BJ (cell line): ENCODE measurements at regions of chr16 and their contacts with region 1.

Region 1: DNA sequence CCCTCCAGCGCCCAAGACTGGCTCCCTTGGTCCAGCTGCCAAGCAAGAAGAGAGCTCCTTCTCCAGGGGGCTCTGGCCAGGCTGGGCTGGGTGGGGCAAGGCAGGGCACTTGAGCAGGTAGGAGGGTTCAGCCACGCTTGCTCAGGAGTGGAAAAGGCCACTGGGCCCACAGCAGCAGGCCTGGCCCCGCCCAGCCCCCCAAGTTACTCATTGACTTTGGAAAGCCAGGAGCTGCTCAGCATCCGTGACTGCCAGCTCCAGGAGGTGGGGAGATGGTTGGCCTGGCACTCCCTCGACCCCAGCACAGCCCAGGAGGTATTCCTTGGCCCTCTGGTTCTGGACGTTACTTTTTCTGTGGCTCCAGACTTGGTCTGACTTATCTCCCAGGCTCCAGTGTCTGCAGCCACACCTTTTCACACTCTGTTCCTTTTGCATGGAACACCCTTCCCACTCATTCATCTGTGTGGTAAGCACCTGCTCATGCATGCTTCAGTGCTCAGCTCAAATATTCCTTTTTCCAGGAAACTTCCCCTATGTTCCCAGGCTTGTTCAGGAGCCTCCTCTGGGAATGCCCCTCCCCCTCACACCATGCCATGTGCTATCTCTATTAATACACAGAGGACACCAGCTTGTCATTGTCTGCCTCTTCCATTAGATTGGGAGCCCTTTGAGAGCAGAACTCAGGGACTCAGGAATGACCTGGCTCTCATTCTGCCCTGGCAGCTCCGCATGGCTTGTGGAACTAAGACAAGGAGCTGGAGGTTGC is at the start of gene CDH16:
- DNase-seq: no peak
- H3K4me3 ChIP-seq: no peak within 1 kb of the TSS
- H3K27me3 ChIP-seq: peaks cover 19% of the 10 kb centered on the region
- CTCF ChIP-seq: no peak
- polyA plus RNA-seq, gene CDH16: not detected in 2 replicates

Region 2: DNA sequence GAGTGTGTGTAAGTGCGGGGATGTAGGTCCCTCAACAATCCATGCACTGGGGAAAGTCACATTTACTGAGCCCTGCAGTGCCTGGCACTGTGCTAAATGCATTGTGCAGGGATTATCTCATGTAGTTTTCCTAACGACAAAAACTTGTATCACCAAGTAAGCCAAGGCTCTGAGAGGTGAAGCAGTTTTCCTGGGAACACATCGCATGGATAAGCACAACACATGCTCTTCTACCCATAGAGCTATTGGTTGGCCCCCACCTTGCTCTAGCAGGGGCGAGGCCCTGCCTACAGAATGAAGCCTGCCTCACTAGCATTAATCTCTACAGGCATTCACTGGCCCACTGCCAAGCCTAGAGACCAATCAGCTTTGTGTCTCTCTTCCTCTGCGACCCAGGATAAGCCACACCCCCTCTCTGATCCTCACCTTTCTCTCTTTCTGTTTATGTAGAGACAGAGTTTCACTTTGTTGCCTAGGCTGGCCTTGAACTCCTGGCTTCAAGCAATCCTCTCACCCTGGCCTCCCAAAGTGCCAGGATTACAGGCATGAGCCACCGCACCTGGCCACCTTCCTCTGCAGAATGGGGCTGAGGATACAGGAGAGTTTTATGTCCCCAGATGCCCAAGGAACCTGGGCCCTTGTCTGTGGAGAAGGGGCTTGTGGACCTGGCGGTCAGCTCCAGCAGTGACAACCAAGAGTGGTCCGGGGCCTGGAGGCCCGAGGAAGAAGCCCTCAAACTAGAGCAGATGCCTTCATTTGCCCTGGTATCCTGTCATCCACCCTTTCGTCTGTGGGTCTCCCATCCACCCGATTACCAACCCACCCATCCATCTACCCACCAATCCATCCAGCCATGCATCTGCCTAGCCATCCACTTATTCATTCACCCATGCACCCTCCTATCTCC is 13.1 kb before region 1 on chr16:
- CTCF ChIA-PET with region 1: interaction called, 118 read pairs
- POLR2A ChIA-PET with region 1: no interaction called
- DNase-seq: no peak
- H3K4me3 ChIP-seq: no peak overlapping the region
- H3K27me3 ChIP-seq: no peaks in the 10 kb centered on the region; the same call in none of the 2 replicates
- CTCF ChIP-seq: no peak

Region 3: DNA sequence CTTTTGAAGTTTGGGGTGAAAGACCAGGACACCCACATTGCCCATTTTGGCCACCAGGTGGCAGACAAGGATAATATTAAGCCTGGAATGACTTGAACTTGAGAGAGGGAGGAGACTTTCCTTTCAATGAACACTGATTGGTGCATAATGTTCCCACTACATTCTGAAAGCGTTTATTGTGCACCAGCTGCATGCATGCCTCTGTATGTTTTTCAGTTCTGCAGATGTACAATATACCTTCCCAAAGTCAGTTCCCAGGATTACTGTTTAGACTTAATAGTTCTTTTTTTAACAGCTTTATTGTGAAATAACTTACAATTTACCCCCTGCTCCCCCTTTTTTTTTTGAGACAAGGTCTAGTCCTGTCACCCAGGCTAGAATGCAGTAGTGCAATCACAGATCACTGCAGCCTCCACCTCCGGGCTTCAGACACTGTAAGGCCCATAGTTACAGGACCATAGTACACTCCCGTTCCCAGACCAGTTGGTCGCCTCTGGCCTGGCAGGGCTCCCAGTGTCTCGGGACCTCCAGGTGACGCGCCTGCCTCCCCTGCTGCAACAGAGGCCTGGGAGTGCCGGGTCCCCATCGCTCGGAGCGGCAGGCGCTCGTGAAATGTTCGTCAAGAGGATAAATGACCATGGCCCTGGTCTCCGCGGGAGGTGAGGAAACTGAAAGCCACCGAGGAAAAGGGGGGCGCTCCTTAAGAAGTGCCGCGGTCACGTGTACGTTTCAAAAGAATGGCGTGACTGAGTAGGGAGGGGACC is 28.5 kb after region 1 on chr16:
- CTCF ChIA-PET with region 1: no interaction called
- POLR2A ChIA-PET with region 1: no interaction called
- DNase-seq: peak; percentile 52
- H3K4me3 ChIP-seq: peak overlapping the region; percentile 44
- H3K27me3 ChIP-seq: peaks cover 7% of the 10 kb centered on the region
- CTCF ChIP-seq: peak; percentile 84